Dendritic cell treated with granulocyte-macrophage colony-stimulating factor and Interleukin-4, amounts not matched to agents 40 ng/mL and 50 ng/mL, for 4 days (primary cell): ENCODE measurements at regions of chr9 and their contacts with region 1.

Region 1: GRCh38 chr9:2014696-2015580 is at the start of gene SMARCA2:
- H3K4me3 Mint-ChIP-seq: peak within 1 kb of the TSS; percentile 94
- H3K27ac Mint-ChIP-seq: peak within 1 kb of the TSS; percentile 96
- H3K4me1 Mint-ChIP-seq: peaks cover 10% of the 10 kb centered on the region
- H3K27me3 Mint-ChIP-seq: no peaks in the 10 kb centered on the region

Region 2: GRCh38 chr9:1604942-1605560 is 409.9 kb before region 1 on chr9:
- intact Hi-C with region 1: no loop called
- H3K4me3 Mint-ChIP-seq: no peak overlapping the region
- H3K27ac Mint-ChIP-seq: no peak overlapping the region
- H3K4me1 Mint-ChIP-seq: no peaks in the 10 kb centered on the region
- H3K27me3 Mint-ChIP-seq: no peaks in the 10 kb centered on the region

Region 3: GRCh38 chr9:1913631-1914330 is 101.2 kb before region 1 on chr9:
- intact Hi-C with region 1: no loop called
- H3K4me3 Mint-ChIP-seq: no peak overlapping the region
- H3K27ac Mint-ChIP-seq: no peak overlapping the region
- H3K4me1 Mint-ChIP-seq: no peaks in the 10 kb centered on the region
- H3K27me3 Mint-ChIP-seq: peaks cover 3% of the 10 kb centered on the region

Region 4: DNA sequence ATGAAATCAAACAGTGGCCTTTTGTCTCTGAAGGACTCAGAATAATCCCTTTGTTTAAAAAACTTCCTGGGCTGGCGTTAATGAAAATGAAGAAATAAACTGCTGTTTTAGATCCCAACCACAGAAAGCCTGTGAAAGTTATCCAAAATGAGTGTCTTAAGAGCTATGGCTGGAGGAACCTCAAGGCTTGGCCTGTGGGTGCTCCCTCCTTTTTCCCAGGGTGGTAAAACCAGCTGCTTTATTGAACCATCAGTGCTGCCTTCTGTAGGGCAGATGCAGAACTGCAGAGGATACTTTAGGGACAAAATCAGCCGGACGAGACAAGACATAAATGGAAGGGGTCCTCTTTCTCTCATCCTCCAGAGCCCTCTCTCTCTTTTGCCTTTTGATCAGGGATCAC is 101.1 kb after region 1 on chr9:
- intact Hi-C with region 1: no loop called
- H3K4me3 Mint-ChIP-seq: no peak overlapping the region
- H3K27ac Mint-ChIP-seq: no peak overlapping the region
- H3K4me1 Mint-ChIP-seq: no peaks in the 10 kb centered on the region
- H3K27me3 Mint-ChIP-seq: no peaks in the 10 kb centered on the region

Region 5: GRCh38 chr9:2158111-2158610 is 143.2 kb after region 1 on chr9:
- intact Hi-C with region 1: loop called (anchors 5 kb)
- H3K4me3 Mint-ChIP-seq: peak overlapping the region; percentile 67
- H3K27ac Mint-ChIP-seq: peak overlapping the region; percentile 77
- H3K4me1 Mint-ChIP-seq: peaks cover 64% of the 10 kb centered on the region
- H3K27me3 Mint-ChIP-seq: no peaks in the 10 kb centered on the region

Region 6: GRCh38 chr9:2837915-2838314 is 823.0 kb after region 1 on chr9:
- intact Hi-C with region 1: loop called (anchors 5 kb)
- H3K4me3 Mint-ChIP-seq: no peak overlapping the region
- H3K27ac Mint-ChIP-seq: no peak overlapping the region
- H3K4me1 Mint-ChIP-seq: peaks cover 20% of the 10 kb centered on the region
- H3K27me3 Mint-ChIP-seq: no peaks in the 10 kb centered on the region